GM10248 (cell line): ENCODE measurements at regions of chr5 and their contacts with region 1.

Region 1: DNA sequence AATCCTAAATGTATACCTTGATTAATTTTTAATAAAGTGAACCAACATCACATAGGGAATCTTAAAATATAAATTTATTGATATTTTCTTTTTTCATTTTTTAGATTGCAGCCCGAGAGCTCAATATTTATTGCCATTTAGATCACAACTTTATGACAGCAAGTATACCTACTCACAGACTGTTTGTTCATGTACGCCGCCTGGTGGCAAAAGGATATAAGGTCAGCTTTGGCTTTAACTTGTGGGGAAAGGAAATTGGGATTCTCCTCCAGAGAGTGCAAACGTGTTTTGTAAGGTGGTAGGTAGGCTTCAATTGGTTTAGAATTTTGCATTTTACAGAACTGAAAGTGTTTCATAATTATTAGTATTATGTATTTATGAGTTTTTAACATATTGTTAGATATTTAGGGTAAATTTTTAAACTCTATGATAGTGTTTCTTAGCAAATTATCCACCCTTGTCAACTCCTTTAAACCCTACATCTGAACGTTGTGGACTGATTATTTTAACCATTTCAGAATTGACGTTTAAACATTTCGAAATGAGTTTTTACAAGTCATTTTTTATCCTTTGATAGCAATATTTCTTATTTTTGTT is 17.5 kb upstream of the DHFR start:
- DNase-seq: peak; percentile 56
- CTCF ChIP-seq: peak; percentile 86

Region 2: GRCh38 chr5:79456890-79457583 is 1215.2 kb before region 1 on chr5:
- CTCF ChIA-PET with region 1: no interaction called
- POLR2A ChIA-PET with region 1: no interaction called
- DNase-seq: peak; percentile 9
- CTCF ChIP-seq: no peak

Region 3: DNA sequence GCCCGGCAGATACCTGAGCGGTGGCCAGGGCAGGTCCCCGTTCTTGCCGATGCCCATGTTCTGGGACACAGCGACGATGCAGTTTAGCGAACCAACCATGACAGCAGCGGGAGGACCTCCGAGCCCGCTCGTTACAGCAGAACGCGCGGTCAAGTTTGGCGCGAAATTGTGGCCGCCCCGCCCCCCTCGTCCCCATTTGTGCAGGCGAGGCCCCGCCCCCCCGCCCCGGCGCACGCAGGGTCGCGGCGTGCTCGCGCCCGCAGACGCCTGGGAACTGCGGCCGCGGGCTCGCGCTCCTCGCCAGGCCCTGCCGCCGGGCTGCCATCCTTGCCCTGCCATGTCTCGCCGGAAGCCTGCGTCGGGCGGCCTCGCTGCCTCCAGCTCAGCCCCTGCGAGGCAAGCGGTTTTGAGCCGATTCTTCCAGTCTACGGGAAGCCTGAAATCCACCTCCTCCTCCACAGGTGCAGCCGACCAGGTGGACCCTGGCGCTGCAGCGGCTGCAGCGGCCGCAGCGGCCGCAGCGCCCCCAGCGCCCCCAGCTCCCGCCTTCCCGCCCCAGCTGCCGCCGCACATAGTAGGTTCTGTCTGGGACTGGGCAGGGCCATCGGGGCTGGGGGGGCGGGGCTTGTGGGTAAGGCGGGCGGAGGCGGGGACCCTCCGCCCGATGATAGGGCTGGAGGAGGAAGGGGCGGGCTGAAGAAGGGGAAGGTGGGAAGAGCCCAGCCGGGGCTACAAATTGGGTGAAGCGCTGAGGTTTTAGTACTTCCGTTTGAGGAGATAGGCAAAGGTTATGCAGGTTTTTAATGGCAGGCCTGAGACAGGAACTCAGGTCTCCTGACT is 17.6 kb before region 1 on chr5 and contains the starts of genes DHFR and MSH3:
- CTCF ChIA-PET with region 1: interaction called, 36 read pairs
- POLR2A ChIA-PET with region 1: no interaction called
- DNase-seq: peak; percentile 94
- CTCF ChIP-seq: peak; percentile 1

Region 4: DNA sequence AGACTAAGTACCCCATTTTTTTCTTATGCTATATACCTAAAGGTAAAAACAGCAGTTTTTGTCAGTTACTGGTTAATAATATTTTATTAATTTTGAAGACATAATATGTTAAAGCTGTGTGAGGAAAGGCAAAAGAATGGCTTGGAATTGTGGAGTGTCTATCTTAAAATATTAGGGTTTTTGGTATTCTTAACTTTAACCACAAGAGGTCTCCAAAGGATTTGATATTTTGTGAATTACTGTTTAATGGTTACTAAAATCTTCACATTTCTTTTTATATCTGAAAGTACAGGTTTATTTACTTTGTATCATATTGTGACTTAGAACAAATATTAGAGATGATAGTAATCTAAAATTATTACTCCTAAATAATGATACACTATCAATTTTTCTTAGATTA is 14.5 kb after region 1 on chr5:
- CTCF ChIA-PET with region 1: interaction called, 12 read pairs
- POLR2A ChIA-PET with region 1: no interaction called
- DNase-seq: no peak
- CTCF ChIP-seq: peak; percentile 24